H1 (cell line): ENCODE measurements at regions of chr10 and their contacts with region 1.

Region 1: GRCh38 chr10:77889277-77889903 is 37.2 kb downstream of the DLG5 start:
- DNase-seq: no peak
- H3K4me3 ChIP-seq: peak overlapping the region in 2 of 4 experiments; percentile 7 to 24; a peak in 2 of 8 replicates
- H3K27ac ChIP-seq: peak overlapping the region; percentile 28; the same call in 1 of the 2 replicates
- H3K4me1 ChIP-seq: peaks cover 28 to 51% (median 31%) of the 10 kb centered on the region in 4 experiments
- H3K27me3 ChIP-seq: no peaks in the 10 kb centered on the region
- CTCF ChIP-seq: no peak
- EP300 ChIP-seq: no peak
- POLR2A ChIP-seq: no peak
- RAD21 ChIP-seq: no peak

Region 2: GRCh38 chr10:77846718-77847630 is 42.4 kb before region 1 on chr10:
- CTCF ChIA-PET with region 1: interaction called, 64 read pairs
- POLR2A ChIA-PET with region 1: interaction called, 5 read pairs
- DNase-seq: peak; percentile 63 to 95
- H3K4me3 ChIP-seq: no peak overlapping the region
- H3K27ac ChIP-seq: peak overlapping the region; percentile 62; the same call in 1 of the 2 replicates
- H3K4me1 ChIP-seq: peaks cover 11 to 25% (median 12%) of the 10 kb centered on the region in 4 experiments
- H3K27me3 ChIP-seq: no peaks in the 10 kb centered on the region
- CTCF ChIP-seq: peak; percentile 87 to 91 (median 91)
- EP300 ChIP-seq: no peak
- POLR2A ChIP-seq: no peak
- RAD21 ChIP-seq: peak; percentile 81 to 86

Region 3: GRCh38 chr10:77907900-77908717 is 18.7 kb after region 1 on chr10:
- CTCF ChIA-PET with region 1: interaction called, 47 read pairs
- POLR2A ChIA-PET with region 1: interaction called, 3 read pairs
- DNase-seq: no peak
- H3K4me3 ChIP-seq: no peak overlapping the region
- H3K27ac ChIP-seq: no peak overlapping the region
- H3K4me1 ChIP-seq: peaks cover 0 to 6% (median 4%) of the 10 kb centered on the region in 4 experiments; a peak in 5 of 7 replicates
- H3K27me3 ChIP-seq: no peaks in the 10 kb centered on the region
- CTCF ChIP-seq: peak; percentile 82 to 93 (median 84)
- EP300 ChIP-seq: no peak
- POLR2A ChIP-seq: no peak
- RAD21 ChIP-seq: peak; percentile 73 to 82

Region 4: GRCh38 chr10:77926566-77927401 is 37.4 kb after region 1 on chr10 and contains the start of gene DLG5:
- CTCF ChIA-PET with region 1: interaction called, 36 read pairs
- POLR2A ChIA-PET with region 1: interaction called, 4 read pairs
- DNase-seq: peak in 1 of 2 experiments; percentile 68
- H3K4me3 ChIP-seq: peak within 1 kb of the TSS; percentile 59 to 83 (median 80)
- H3K27ac ChIP-seq: peak within 1 kb of the TSS; percentile 79; the same call in 1 of the 2 replicates
- H3K4me1 ChIP-seq: peaks cover 5 to 19% (median 8%) of the 10 kb centered on the region in 4 experiments
- H3K27me3 ChIP-seq: peaks cover 0 to 4% (median 2%) of the 10 kb centered on the region in 4 experiments; a peak in 1 of 7 replicates
- CTCF ChIP-seq: no peak
- EP300 ChIP-seq: no peak
- POLR2A ChIP-seq: no peak
- RAD21 ChIP-seq: peak in 1 of 2 experiments; percentile 5; a peak in 1 of 4 replicates
- total RNA-seq, gene DLG5: 71.4 and 71.8 TPM in 2 replicates

Region 5: DNA sequence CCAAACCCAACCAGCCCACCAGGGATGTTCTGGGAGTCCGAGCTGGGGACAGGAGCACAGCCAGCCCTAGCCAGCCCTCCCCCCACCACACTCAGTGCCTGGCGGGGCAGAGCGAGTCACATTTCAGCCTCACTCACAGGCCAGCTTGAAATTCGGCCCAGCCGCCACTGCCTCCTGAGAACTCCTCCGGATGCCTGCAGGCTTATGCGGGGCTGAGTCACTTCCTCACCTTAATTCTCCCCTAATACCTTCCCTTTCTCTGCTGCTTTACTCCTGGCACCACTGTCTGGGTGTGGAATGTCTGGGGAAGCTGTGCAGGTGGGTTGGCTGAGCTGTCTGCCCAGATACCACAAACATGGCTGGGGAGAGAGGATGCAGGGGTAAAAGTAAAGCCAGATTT is 59.8 kb after region 1 on chr10:
- CTCF ChIA-PET with region 1: interaction called, 10 read pairs
- POLR2A ChIA-PET with region 1: no interaction called
- DNase-seq: peak; percentile 79 to 82
- H3K4me3 ChIP-seq: peak overlapping the region in 1 of 4 experiments; percentile 12; a peak in 2 of 8 replicates
- H3K27ac ChIP-seq: peak overlapping the region; percentile 52; the same call in 1 of the 2 replicates
- H3K4me1 ChIP-seq: peaks cover 8 to 13% (median 11%) of the 10 kb centered on the region in 4 experiments
- H3K27me3 ChIP-seq: no peaks in the 10 kb centered on the region
- CTCF ChIP-seq: no peak
- EP300 ChIP-seq: no peak
- POLR2A ChIP-seq: peak; percentile 48 to 56; a peak in 2 of 3 replicates
- RAD21 ChIP-seq: no peak